MCF 10A (cell line): ENCODE measurements at regions of chr2 and their contacts with region 1.

Region 1: DNA sequence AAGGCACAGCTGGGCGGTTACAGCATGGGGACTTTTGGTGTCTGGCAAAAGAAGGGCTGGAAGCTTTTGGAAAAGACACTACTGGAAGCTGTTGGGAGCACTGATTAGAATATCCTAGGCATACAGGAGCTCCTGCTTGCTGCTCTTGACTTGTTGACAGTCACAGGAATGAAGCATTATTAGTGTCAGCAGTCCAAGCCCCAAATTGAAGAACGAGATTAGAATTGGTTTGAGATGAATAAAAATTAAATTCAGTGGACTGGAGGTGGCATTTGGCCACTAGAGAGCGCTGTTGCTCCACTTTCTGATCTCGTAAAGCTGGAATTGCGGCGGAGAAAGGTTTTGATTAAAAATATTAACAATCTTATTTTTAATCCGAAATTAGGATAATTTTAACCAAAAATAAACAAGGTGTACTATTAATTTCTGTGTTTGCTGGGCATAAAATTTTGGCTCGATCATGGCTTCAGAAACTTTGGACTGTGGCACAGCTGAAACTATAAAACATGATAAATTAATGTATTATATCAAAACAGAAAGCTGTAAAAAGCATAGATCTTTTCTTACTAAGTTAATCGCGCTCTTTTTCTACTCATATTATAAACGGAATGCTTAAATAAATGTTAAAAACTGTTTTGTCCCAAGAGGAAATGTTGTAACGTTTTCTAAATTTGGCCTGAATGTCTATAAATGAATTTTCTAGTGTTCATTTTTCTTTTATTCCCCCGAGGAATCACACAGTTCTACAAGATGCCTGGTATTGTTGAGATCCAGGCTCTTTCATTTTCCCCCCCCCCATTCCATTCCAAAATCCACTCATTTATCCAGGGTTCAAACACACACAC is 2.4 kb upstream of the HOXD8 start:
- DNase-seq: peak; percentile 63
- H3K4me3 Mint-ChIP-seq: no peak overlapping the region
- H3K27ac Mint-ChIP-seq: no peak overlapping the region
- H3K4me1 Mint-ChIP-seq: no peaks in the 10 kb centered on the region
- H3K27me3 Mint-ChIP-seq: peaks cover 11% of the 10 kb centered on the region
- CTCF ChIP-seq: peak; percentile 76

Region 2: GRCh38 chr2:174815526-174815925 is 1311.6 kb before region 1 on chr2:
- CTCF ChIA-PET with region 1: no interaction called
- POLR2A ChIA-PET with region 1: no interaction called
- intact Hi-C with region 1: no loop called
- DNase-seq: no peak
- H3K4me3 Mint-ChIP-seq: no peak overlapping the region
- H3K27ac Mint-ChIP-seq: peak overlapping the region; percentile 27
- H3K4me1 Mint-ChIP-seq: peaks cover 8% of the 10 kb centered on the region
- H3K27me3 Mint-ChIP-seq: no peaks in the 10 kb centered on the region
- CTCF ChIP-seq: no peak

Region 3: DNA sequence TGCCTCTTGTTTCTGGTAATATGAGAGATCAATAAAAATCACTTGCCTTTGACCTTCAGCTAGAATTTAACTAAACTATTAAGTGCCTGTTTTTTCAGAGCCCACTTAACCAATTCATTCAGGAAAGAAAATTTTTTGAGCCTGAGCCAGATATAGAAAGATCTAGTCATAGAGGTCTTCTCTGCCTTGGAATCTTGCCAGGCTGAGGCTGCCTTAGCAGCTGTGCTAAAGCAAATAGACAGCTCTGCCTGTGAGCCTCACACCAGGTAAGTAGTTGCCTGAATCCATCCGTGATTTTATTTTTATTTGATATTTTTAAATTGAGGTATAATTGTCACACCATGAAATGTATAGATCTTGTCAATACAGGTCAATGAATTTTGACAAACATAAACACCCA is 70.7 kb before region 1 on chr2:
- CTCF ChIA-PET with region 1: no interaction called
- POLR2A ChIA-PET with region 1: no interaction called
- intact Hi-C with region 1: no loop called
- DNase-seq: peak; percentile 44
- H3K4me3 Mint-ChIP-seq: no peak overlapping the region
- H3K27ac Mint-ChIP-seq: no peak overlapping the region
- H3K4me1 Mint-ChIP-seq: no peaks in the 10 kb centered on the region
- H3K27me3 Mint-ChIP-seq: peaks cover 57% of the 10 kb centered on the region
- CTCF ChIP-seq: no peak

Region 4: DNA sequence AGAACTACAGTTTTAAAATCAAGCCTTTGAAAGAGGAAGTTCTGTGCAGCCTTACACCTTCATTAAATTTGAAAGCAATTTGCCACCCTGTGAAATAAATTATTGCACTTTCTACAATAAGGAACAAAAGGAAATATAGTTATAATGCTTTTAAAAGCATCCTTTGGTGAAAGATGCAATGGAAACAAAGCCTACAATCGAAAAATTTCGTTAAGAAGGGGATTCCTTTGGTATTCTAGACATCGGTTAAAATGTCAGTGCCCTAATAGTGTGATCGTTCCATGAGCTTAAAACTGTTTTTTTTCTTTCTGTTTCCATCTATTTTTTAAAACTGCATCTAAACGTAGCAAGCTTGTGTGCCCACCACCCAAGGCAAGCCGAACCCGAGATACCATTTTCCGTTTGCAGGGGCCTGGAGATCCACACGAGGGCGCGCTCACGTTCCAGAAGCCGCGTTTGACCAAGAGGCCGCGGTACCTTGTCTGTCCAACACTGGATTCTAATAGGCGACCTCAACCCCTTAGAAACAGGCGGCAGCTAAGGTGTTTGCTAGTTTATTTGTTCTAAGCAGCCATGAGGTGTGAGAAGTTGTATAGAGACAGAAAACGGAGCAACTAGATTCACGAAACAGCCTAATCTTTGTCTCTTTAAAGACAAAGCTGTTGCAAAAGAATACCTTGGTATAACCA is 16.0 kb before region 1 on chr2:
- CTCF ChIA-PET with region 1: interaction called, 16 read pairs
- POLR2A ChIA-PET with region 1: interaction called, 3 read pairs
- intact Hi-C with region 1: no loop called
- DNase-seq: peak; percentile 58
- H3K4me3 Mint-ChIP-seq: no peak overlapping the region
- H3K27ac Mint-ChIP-seq: no peak overlapping the region
- H3K4me1 Mint-ChIP-seq: peaks cover 4% of the 10 kb centered on the region
- H3K27me3 Mint-ChIP-seq: peaks cover 8% of the 10 kb centered on the region
- CTCF ChIP-seq: peak; percentile 56

Region 5: GRCh38 chr2:176115883-176116813 is 11.0 kb before region 1 on chr2 and contains the start of gene HOXD10:
- CTCF ChIA-PET with region 1: interaction called, 16 read pairs
- POLR2A ChIA-PET with region 1: interaction called, 3 read pairs
- intact Hi-C with region 1: no loop called
- DNase-seq: no peak
- H3K4me3 Mint-ChIP-seq: peak within 1 kb of the TSS; percentile 28
- H3K27ac Mint-ChIP-seq: no peak within 1 kb of the TSS
- H3K4me1 Mint-ChIP-seq: no peaks in the 10 kb centered on the region
- H3K27me3 Mint-ChIP-seq: peaks cover 48% of the 10 kb centered on the region
- CTCF ChIP-seq: no peak
- total RNA-seq, gene HOXD10: not detected in 2 replicates

Region 6: GRCh38 chr2:176200981-176201380 is 73.8 kb after region 1 on chr2:
- CTCF ChIA-PET with region 1: no interaction called
- POLR2A ChIA-PET with region 1: no interaction called
- intact Hi-C with region 1: no loop called
- DNase-seq: no peak
- H3K4me3 Mint-ChIP-seq: no peak overlapping the region
- H3K27ac Mint-ChIP-seq: no peak overlapping the region
- H3K4me1 Mint-ChIP-seq: no peaks in the 10 kb centered on the region
- H3K27me3 Mint-ChIP-seq: no peaks in the 10 kb centered on the region
- CTCF ChIP-seq: no peak

Region 7: GRCh38 chr2:176638167-176639015 is 511.2 kb after region 1 on chr2:
- CTCF ChIA-PET with region 1: interaction called, 60 read pairs
- POLR2A ChIA-PET with region 1: no interaction called
- intact Hi-C with region 1: no loop called
- DNase-seq: peak; percentile 61
- H3K4me3 Mint-ChIP-seq: peak overlapping the region; percentile 74
- H3K27ac Mint-ChIP-seq: no peak overlapping the region
- H3K4me1 Mint-ChIP-seq: peaks cover 6% of the 10 kb centered on the region
- H3K27me3 Mint-ChIP-seq: no peaks in the 10 kb centered on the region
- CTCF ChIP-seq: peak; percentile 85

Region 8: GRCh38 chr2:176643646-176644045 is 516.5 kb after region 1 on chr2:
- CTCF ChIA-PET with region 1: interaction called, 60 read pairs
- POLR2A ChIA-PET with region 1: no interaction called
- intact Hi-C with region 1: no loop called
- DNase-seq: no peak
- H3K4me3 Mint-ChIP-seq: no peak overlapping the region
- H3K27ac Mint-ChIP-seq: no peak overlapping the region
- H3K4me1 Mint-ChIP-seq: peaks cover 6% of the 10 kb centered on the region
- H3K27me3 Mint-ChIP-seq: no peaks in the 10 kb centered on the region
- CTCF ChIP-seq: no peak

Region 9: GRCh38 chr2:177143444-177143843 is 1016.3 kb after region 1 on chr2:
- CTCF ChIA-PET with region 1: interaction called, 40 read pairs
- POLR2A ChIA-PET with region 1: interaction called, 7 read pairs
- intact Hi-C with region 1: loop called (anchors 2 kb)
- DNase-seq: peak; percentile 58
- H3K4me3 Mint-ChIP-seq: no peak overlapping the region
- H3K27ac Mint-ChIP-seq: no peak overlapping the region
- H3K4me1 Mint-ChIP-seq: peaks cover 7% of the 10 kb centered on the region
- H3K27me3 Mint-ChIP-seq: peaks cover 43% of the 10 kb centered on the region
- CTCF ChIP-seq: no peak